CD8-positive, alpha-beta T cell (primary cell): ENCODE measurements at regions of chr16 and their contacts with region 1.

Region 1: GRCh38 chr16:81737885-81738786 is 41.0 kb upstream of the PLCG2 start:
- DNase-seq: peak; percentile 69 to 92 (median 87)
- ATAC-seq: peak; percentile 96
- H3K4me3 ChIP-seq: peak overlapping the region; percentile 22 to 24
- H3K4me3 Mint-ChIP-seq: peak overlapping the region; percentile 76
- H3K27ac ChIP-seq: no peak overlapping the region
- H3K27ac Mint-ChIP-seq: no peak overlapping the region
- H3K4me1 ChIP-seq: peaks cover 6% of the 10 kb centered on the region
- H3K4me1 Mint-ChIP-seq: peaks cover 6% of the 10 kb centered on the region
- H3K27me3 ChIP-seq: no peaks in the 10 kb centered on the region
- H3K27me3 Mint-ChIP-seq: no peaks in the 10 kb centered on the region
- CTCF ChIP-seq: peak; percentile 85

Region 2: GRCh38 chr16:80824718-80825364 is 913.3 kb before region 1 on chr16:
- CTCF ChIA-PET with region 1: no interaction called
- POLR2A ChIA-PET with region 1: no interaction called
- intact Hi-C with region 1: no loop called
- DNase-seq: peak in 5 of 9 experiments; percentile 9 to 74 (median 25)
- ATAC-seq: no peak
- H3K4me3 ChIP-seq: no peak overlapping the region
- H3K4me3 Mint-ChIP-seq: no peak overlapping the region
- H3K27ac ChIP-seq: no peak overlapping the region
- H3K27ac Mint-ChIP-seq: no peak overlapping the region
- H3K4me1 ChIP-seq: no peaks in the 10 kb centered on the region
- H3K4me1 Mint-ChIP-seq: peaks cover 2% of the 10 kb centered on the region
- H3K27me3 ChIP-seq: no peaks in the 10 kb centered on the region
- H3K27me3 Mint-ChIP-seq: peaks cover 6% of the 10 kb centered on the region
- CTCF ChIP-seq: peak; percentile 92

Region 3: DNA sequence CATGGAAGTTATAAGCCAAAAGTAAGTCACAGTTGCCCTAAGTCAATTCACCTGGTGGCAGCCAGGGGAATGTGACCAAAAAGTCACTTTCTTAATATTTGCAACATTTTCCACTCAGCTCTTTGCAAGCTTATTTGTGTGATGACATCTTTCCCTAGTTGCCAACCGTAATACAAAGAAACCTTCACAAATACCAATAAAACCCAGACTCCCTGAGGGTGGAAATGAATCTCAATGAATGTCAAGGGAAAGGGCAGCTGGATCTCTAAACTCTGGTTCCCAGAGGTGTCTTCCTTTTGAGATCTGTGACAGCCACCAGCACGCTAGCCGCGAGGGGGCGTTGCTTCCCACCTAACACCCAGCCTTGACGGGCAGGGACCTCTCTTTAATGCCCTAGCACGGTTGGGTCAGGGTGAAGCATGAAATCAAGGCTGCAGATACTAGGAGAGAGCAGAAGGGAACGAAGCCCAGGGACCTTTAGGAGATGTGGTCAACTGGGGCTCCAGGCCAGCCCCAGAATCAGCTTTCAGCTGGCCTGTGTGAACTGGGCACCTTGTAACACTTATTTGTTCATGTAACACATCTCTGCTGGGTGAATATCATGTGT is 813.7 kb before region 1 on chr16:
- CTCF ChIA-PET with region 1: no interaction called
- POLR2A ChIA-PET with region 1: no interaction called
- intact Hi-C with region 1: loop called in 1 of 2 experiments (anchors 5 kb)
- DNase-seq: peak in 4 of 9 experiments; percentile 25 to 43 (median 32)
- ATAC-seq: no peak
- H3K4me3 ChIP-seq: no peak overlapping the region
- H3K4me3 Mint-ChIP-seq: no peak overlapping the region
- H3K27ac ChIP-seq: no peak overlapping the region
- H3K27ac Mint-ChIP-seq: no peak overlapping the region
- H3K4me1 ChIP-seq: no peaks in the 10 kb centered on the region
- H3K4me1 Mint-ChIP-seq: no peaks in the 10 kb centered on the region
- H3K27me3 ChIP-seq: no peaks in the 10 kb centered on the region
- H3K27me3 Mint-ChIP-seq: peaks cover 22% of the 10 kb centered on the region
- CTCF ChIP-seq: peak; percentile 23

Region 4: GRCh38 chr16:81204798-81205680 is 533.1 kb before region 1 on chr16:
- CTCF ChIA-PET with region 1: interaction called, 9 read pairs
- POLR2A ChIA-PET with region 1: no interaction called
- intact Hi-C with region 1: loop called in 1 of 2 experiments (anchors 1 kb)
- DNase-seq: peak in 7 of 9 experiments; percentile 20 to 64 (median 45)
- ATAC-seq: no peak
- H3K4me3 ChIP-seq: no peak overlapping the region
- H3K4me3 Mint-ChIP-seq: no peak overlapping the region
- H3K27ac ChIP-seq: no peak overlapping the region
- H3K27ac Mint-ChIP-seq: no peak overlapping the region
- H3K4me1 ChIP-seq: no peaks in the 10 kb centered on the region
- H3K4me1 Mint-ChIP-seq: no peaks in the 10 kb centered on the region
- H3K27me3 ChIP-seq: no peaks in the 10 kb centered on the region
- H3K27me3 Mint-ChIP-seq: peaks cover 11% of the 10 kb centered on the region
- CTCF ChIP-seq: peak; percentile 61

Region 5: GRCh38 chr16:81366316-81366932 is 371.7 kb before region 1 on chr16:
- CTCF ChIA-PET with region 1: interaction called, 94 read pairs
- POLR2A ChIA-PET with region 1: no interaction called
- intact Hi-C with region 1: loop called (anchors 1 kb)
- DNase-seq: peak in 3 of 9 experiments; percentile 18 to 72 (median 64)
- ATAC-seq: peak; percentile 83
- H3K4me3 ChIP-seq: no peak overlapping the region
- H3K4me3 Mint-ChIP-seq: no peak overlapping the region
- H3K27ac ChIP-seq: no peak overlapping the region
- H3K27ac Mint-ChIP-seq: no peak overlapping the region
- H3K4me1 ChIP-seq: no peaks in the 10 kb centered on the region
- H3K4me1 Mint-ChIP-seq: no peaks in the 10 kb centered on the region
- H3K27me3 ChIP-seq: no peaks in the 10 kb centered on the region
- H3K27me3 Mint-ChIP-seq: no peaks in the 10 kb centered on the region
- CTCF ChIP-seq: peak; percentile 85

Region 6: DNA sequence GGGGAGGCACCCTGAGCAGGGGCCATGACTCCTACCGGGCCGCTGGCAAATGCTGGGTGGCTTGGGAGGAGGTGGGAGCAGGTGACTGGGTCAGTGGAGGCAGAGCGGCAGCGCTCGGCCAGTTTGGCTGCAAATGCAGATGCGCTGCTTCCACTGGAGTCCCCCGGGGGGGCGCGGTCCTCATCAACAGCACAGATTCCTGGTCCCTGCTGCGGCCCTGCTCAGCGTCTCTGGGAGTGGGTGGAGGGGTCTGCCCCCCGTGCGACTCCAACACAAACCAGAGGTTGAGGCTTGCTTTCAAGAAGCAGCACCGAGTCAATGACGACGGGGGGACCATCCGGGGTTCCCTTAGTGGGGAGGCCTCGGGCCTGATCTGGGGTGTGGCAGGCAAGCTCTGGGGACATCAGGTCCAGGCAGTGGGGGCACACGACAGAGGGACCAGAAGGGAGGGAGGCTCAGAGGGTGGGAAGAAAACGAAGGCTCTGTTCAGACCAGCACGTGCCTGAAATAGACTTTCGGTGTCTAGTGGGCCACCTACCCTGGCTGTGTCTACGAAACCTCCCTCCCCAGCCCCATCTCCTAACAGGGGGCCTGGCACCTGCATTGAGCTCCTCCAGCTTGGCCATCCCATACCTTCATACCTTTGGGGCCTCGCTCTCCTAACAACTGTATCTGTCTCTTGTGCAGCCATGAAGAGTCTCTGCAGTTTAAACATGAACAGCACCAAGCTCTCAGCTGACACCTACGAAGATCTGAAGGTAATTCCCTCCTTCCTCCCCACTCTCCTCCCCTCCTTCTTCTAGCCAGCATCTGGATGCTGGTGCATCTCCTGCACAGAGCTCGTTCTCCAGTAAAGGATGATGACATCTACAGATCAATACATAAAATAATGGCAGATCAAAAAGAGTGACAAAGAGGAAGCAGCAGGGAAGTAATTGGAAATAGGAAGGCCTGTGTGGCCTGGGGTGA is 31.5 kb before region 1 on chr16:
- CTCF ChIA-PET with region 1: no interaction called
- POLR2A ChIA-PET with region 1: no interaction called
- intact Hi-C with region 1: no loop called
- DNase-seq: no peak
- ATAC-seq: no peak
- H3K4me3 ChIP-seq: no peak overlapping the region
- H3K4me3 Mint-ChIP-seq: no peak overlapping the region
- H3K27ac ChIP-seq: no peak overlapping the region
- H3K27ac Mint-ChIP-seq: no peak overlapping the region
- H3K4me1 ChIP-seq: no peaks in the 10 kb centered on the region
- H3K4me1 Mint-ChIP-seq: no peaks in the 10 kb centered on the region
- H3K27me3 ChIP-seq: no peaks in the 10 kb centered on the region
- H3K27me3 Mint-ChIP-seq: no peaks in the 10 kb centered on the region
- CTCF ChIP-seq: no peak

Region 7: DNA sequence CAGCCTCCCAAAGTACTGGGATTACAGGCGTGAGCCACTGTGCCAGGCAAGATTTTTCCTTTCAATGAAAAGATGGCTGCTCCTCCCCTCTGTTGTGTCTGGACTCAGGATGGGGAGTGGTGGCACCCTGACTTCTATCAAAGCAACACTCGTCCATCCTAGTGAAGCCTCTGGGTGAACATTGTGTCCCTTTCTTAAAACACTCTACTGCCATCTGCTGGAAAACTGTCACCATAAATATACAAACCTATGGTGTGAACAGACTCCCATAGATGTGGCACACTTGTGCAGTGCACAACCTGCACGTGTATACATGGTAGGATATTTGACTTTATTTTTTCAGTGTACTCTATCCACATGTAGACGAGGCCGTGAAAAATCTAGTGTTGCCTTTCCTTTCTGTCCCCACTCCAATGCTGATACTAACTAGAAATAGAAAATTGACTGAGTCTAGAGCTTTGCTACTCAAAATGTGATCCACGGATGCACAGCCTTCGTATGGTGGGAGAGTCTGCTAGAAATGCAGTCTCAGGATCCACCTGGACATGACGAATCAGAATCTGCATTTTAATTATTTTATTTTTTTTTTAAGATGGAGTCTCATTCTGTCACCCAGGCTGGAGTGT is 14.9 kb before region 1 on chr16:
- CTCF ChIA-PET with region 1: interaction called, 42 read pairs
- POLR2A ChIA-PET with region 1: no interaction called
- intact Hi-C with region 1: loop called in 1 of 2 experiments (anchors 2 kb)
- DNase-seq: peak in 6 of 9 experiments; percentile 27 to 87 (median 58)
- ATAC-seq: peak; percentile 68
- H3K4me3 ChIP-seq: no peak overlapping the region
- H3K4me3 Mint-ChIP-seq: no peak overlapping the region
- H3K27ac ChIP-seq: no peak overlapping the region
- H3K27ac Mint-ChIP-seq: no peak overlapping the region
- H3K4me1 ChIP-seq: peaks cover 6% of the 10 kb centered on the region
- H3K4me1 Mint-ChIP-seq: peaks cover 15% of the 10 kb centered on the region
- H3K27me3 ChIP-seq: no peaks in the 10 kb centered on the region
- H3K27me3 Mint-ChIP-seq: no peaks in the 10 kb centered on the region
- CTCF ChIP-seq: peak; percentile 76